Esophagus squamous epithelium (tissue), 5 donors: ENCODE measurements at regions of chr5 and their contacts with region 1.

Region 1: DNA sequence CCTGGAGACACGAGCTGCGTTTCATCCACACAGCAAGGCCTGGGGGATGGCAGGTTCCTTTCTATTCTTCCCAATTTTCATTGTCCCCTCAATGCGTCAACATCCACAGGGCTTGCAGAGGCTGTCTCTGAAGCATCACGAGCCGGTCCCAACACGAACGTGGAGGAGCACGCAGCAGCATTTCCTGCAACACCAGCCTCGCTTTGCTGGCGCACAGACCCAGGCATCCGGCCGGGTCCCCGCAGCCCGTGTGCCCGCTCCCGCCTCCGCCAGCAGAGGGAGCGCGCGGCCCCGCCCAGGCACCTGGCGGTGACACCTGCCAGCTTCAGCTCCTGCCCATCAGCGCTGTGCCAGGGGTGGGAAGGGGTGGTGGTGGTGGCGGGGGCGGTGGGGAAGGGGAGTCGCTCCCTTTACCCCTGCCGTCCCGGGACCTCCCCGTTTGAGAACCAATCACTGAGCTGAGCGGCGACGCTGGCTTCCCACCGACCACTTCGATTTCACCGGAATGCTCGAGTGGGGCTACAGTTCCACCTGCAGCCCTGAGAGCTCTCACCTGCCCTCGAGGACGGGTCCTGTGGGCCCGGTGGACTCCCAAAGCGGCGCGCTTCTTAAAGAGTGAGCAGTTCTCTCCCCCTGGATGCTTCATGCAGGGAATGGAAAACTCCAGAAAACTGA is 464.5 kb downstream of the ICE1 start:
- DNase-seq: no peak
- H3K4me3 ChIP-seq: no peak overlapping the region
- H3K27ac ChIP-seq: no peak overlapping the region
- H3K4me1 ChIP-seq: peaks cover 0 to 7% (median 0%) of the 10 kb centered on the region in 3 donors
- H3K27me3 ChIP-seq: peaks cover 0 to 21% (median 0%) of the 10 kb centered on the region in 4 donors
- CTCF ChIP-seq: peak in 5 of 6 experiments; percentile 38 to 78 (median 55)
- POLR2A ChIP-seq: no peak

Region 2: GRCh38 chr5:5492087-5492933 is 394.6 kb before region 1 on chr5:
- intact Hi-C with region 1: loop called (anchors 10 kb)
- DNase-seq: no peak
- H3K4me3 ChIP-seq: no peak overlapping the region
- H3K27ac ChIP-seq: no peak overlapping the region
- H3K4me1 ChIP-seq: peaks cover 11 to 23% (median 13%) of the 10 kb centered on the region in 3 donors
- H3K27me3 ChIP-seq: peaks cover 0 to 21% (median 0%) of the 10 kb centered on the region in 4 donors
- CTCF ChIP-seq: peak; percentile 36 to 72 (median 54)
- POLR2A ChIP-seq: no peak

Region 3: DNA sequence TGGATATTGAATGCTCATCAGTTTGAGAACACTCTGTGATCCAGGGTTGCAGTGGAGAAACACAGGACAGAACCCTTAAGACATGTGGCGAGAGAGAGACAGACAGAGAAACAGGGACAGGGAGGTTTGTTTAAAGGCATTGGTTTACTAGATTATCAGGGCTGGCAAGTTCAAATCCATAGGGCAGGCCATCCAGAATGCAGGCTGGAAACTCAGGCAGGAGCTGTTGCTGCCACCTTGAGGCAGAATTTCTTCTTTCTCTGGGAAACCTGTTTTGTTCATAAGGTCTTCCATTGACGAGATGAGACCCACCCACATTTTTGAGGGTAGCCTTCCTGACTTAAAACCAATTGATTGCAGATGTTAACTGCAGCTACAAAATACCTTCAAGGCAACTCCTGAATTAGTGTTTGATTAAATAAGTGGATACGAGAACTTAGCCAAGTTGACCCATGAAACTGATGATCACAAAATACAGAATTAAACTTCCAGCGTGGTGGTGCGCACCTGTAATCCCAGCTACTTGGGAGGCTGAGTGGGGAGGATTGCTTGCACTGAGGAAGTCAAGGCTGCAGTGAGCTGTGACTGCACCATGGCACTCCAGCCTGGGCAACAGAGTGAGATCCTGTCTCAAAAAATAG is 690.0 kb after region 1 on chr5:
- intact Hi-C with region 1: loop called (anchors 10 kb)
- DNase-seq: no peak
- H3K4me3 ChIP-seq: no peak overlapping the region
- H3K27ac ChIP-seq: no peak overlapping the region
- H3K4me1 ChIP-seq: no peaks in the 10 kb centered on the region
- H3K27me3 ChIP-seq: peaks cover 0 to 55% (median 0%) of the 10 kb centered on the region in 4 donors
- CTCF ChIP-seq: peak in 5 of 6 experiments; percentile 28 to 62 (median 48)
- POLR2A ChIP-seq: no peak